Heart left ventricle (tissue), 16 donors: ENCODE measurements at regions of chr3 and their contacts with region 1.

Region 1: DNA sequence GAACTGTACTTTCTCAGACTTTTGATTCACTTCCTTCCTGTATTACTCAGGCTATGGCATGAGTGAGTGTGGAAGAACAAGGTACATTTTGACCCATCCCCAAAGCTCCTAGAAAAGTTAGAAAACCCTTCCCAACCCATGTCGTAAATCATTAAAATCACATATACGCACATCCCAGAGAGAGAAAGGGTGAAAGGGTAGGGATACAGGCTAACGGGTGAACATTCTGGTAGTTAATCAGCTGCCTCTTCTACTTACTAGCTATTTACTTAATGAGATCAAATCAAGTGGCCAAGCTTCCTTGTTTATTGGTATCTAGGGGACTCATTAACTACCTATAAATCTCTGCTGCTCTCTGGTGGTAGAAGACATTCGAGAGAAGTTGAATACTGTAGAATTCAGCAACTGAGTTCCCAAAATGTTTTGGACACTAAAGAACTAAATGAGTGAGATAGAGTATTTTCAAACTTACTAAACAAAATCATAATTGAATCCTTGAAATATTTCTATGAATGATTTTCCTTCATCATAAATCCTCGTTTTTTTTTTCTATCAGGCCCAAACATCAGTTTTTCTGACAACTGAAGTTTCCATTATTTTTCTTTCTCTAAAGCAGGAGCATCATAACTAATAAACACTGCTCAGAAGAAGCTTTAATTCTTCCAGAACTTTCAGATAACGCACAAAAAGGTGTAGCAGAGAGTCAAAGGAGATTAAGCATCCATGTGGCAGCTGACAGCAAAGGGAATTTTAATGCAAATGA is 124.2 kb downstream of the IMPG2 start:
- DNase-seq: no peak
- ATAC-seq: peak in 3 of 4 donors; percentile 64 to 86 (median 77)
- H3K4me3 ChIP-seq: no peak overlapping the region
- H3K27ac ChIP-seq: no peak overlapping the region
- H3K4me1 ChIP-seq: no peaks in the 10 kb centered on the region
- H3K27me3 ChIP-seq: no peaks in the 10 kb centered on the region
- CTCF ChIP-seq: peak; percentile 39 to 74 (median 66)
- POLR2A ChIP-seq: no peak

Region 2: GRCh38 chr3:100463002-100463401 is 733.1 kb before region 1 on chr3:
- intact Hi-C with region 1: loop called in 3 of 10 experiments (anchors 10 kb)
- DNase-seq: peak in 1 of 5 donors; percentile 10
- ATAC-seq: peak in 3 of 4 donors; percentile 77 to 89 (median 85)
- H3K4me3 ChIP-seq: no peak overlapping the region
- H3K27ac ChIP-seq: no peak overlapping the region
- H3K4me1 ChIP-seq: peaks cover 0 to 9% (median 0%) of the 10 kb centered on the region in 12 donors
- H3K27me3 ChIP-seq: no peaks in the 10 kb centered on the region
- CTCF ChIP-seq: peak; percentile 47 to 79 (median 62)
- POLR2A ChIP-seq: no peak

Region 3: GRCh38 chr3:100737334-100737733 is 458.8 kb before region 1 on chr3:
- intact Hi-C with region 1: loop called in 1 of 10 experiments (anchors 10 kb)
- DNase-seq: no peak
- ATAC-seq: no peak
- H3K4me3 ChIP-seq: no peak overlapping the region
- H3K27ac ChIP-seq: no peak overlapping the region
- H3K4me1 ChIP-seq: peaks cover 0 to 32% (median 5%) of the 10 kb centered on the region in 12 donors
- H3K27me3 ChIP-seq: no peaks in the 10 kb centered on the region
- CTCF ChIP-seq: peak in 10 of 12 donors; percentile 9 to 50 (median 34)
- POLR2A ChIP-seq: no peak

Region 4: GRCh38 chr3:100893590-100893989 is 302.5 kb before region 1 on chr3:
- intact Hi-C with region 1: loop called in 9 of 10 experiments (anchors 1 to 10 kb)
- DNase-seq: no peak
- ATAC-seq: peak; percentile 47 to 59 (median 50)
- H3K4me3 ChIP-seq: no peak overlapping the region
- H3K27ac ChIP-seq: peak overlapping the region in 1 of 12 donors; percentile 61
- H3K4me1 ChIP-seq: peaks cover 0 to 10% (median 0%) of the 10 kb centered on the region in 12 donors
- H3K27me3 ChIP-seq: no peaks in the 10 kb centered on the region
- CTCF ChIP-seq: peak in 10 of 12 donors; percentile 18 to 53 (median 44)
- POLR2A ChIP-seq: no peak

Region 5: DNA sequence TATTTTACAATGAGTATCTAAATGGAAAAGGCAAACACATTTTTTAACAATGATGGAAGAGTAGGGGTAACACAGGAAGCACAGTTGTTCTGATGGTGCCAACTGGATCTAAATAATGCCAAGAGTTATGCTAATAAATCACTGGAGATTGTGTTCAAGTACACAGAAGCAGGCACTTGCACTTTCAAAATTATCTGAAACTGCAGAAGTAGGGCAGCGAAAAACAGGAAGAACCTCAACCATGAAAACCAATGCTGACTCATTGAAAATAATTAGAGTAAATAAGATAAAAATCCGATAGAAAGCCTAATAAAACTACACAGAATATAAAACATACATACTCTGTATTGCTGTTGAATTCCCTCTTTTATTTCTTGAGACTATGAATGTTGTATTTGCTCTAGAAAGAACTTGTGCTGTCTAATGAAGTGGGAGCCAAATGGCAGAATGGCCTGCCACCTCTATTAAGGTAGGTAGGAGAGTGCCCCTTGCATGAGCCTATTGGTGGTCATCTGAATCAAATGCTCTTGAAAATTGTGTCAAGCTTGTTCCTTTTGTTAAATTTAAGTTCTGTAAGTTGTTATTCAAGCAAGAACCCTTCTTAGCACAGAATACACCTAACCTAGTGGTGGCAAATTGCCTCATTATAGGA is 296.6 kb before region 1 on chr3:
- intact Hi-C with region 1: loop called in 6 of 10 experiments (anchors 5 to 10 kb)
- DNase-seq: no peak
- ATAC-seq: no peak
- H3K4me3 ChIP-seq: no peak overlapping the region
- H3K27ac ChIP-seq: peak overlapping the region in 1 of 12 donors; percentile 72
- H3K4me1 ChIP-seq: peaks cover 0 to 20% (median 0%) of the 10 kb centered on the region in 12 donors
- H3K27me3 ChIP-seq: no peaks in the 10 kb centered on the region
- CTCF ChIP-seq: no peak
- POLR2A ChIP-seq: no peak

Region 6: GRCh38 chr3:101069901-101070798 is 126.0 kb before region 1 on chr3:
- intact Hi-C with region 1: loop called in 9 of 10 experiments (anchors 1 to 5 kb)
- DNase-seq: peak; percentile 13 to 80 (median 53)
- ATAC-seq: peak; percentile 55 to 82 (median 78)
- H3K4me3 ChIP-seq: no peak overlapping the region
- H3K27ac ChIP-seq: no peak overlapping the region
- H3K4me1 ChIP-seq: peaks cover 0 to 16% (median 0%) of the 10 kb centered on the region in 12 donors
- H3K27me3 ChIP-seq: no peaks in the 10 kb centered on the region
- CTCF ChIP-seq: peak; percentile 51 to 72 (median 64)
- POLR2A ChIP-seq: no peak